Activated CD4-positive, alpha-beta T cell treated with anti-CD3 and anti-CD28 coated beads, Interleukin-2, amount 10 ng/mL, durations not matched to agents 7 days and 5 days (primary cell): ENCODE measurements at regions of chr14 and their contacts with region 1.

Region 1: GRCh38 chr14:49867831-49868723 is 15.5 kb upstream of the NEMF start:
- DNase-seq: peak; percentile 98
- H3K4me3 Mint-ChIP-seq: peak overlapping the region; percentile 88
- H3K27ac Mint-ChIP-seq: peak overlapping the region; percentile 95
- H3K4me1 Mint-ChIP-seq: peaks cover 19% of the 10 kb centered on the region
- H3K27me3 Mint-ChIP-seq: no peaks in the 10 kb centered on the region

Region 2: DNA sequence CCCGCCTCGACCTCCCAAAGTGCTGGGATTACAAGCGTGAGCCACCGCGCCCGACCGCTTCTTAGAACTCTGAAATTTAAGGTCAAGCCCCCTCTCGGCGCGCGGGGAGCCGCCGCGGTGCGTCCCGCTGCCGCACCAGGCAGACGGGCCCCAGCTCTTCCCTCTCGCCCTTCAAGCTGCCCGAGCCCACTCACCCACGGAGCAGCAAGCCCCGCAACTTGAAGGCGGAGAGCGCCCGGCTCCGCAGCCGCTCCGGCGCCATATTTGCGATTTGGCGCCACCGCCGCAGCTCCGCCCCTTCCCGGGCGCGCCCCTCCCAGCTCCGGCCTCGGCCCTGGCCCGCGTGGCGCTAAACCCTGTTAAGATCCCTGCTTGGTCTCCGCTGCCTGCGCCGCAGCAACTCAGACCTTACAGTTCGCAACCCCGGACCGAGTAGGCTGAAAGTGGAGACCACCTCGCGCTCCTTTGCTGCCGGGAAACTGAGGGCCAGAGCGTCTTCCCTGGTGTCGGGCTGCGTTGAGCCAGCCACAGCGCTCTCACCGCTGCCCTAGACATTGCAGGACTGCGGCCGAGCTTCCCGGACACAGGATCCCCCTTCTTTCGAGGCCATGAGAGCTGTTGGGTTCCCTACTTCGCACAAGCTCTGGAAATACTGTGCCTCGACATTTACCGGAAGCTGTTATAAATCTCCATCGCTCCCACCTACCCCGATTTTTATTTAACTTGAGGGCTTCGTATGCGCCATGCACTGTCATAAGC is 180.0 kb before region 1 on chr14 and contains the start of gene POLE2:
- CTCF ChIA-PET with region 1: no interaction called
- POLR2A ChIA-PET with region 1: no interaction called
- DNase-seq: peak; percentile 77
- H3K4me3 Mint-ChIP-seq: peak within 1 kb of the TSS; percentile 90
- H3K27ac Mint-ChIP-seq: peak within 1 kb of the TSS; percentile 94
- H3K4me1 Mint-ChIP-seq: peaks cover 55% of the 10 kb centered on the region
- H3K27me3 Mint-ChIP-seq: no peaks in the 10 kb centered on the region
- total RNA-seq, gene POLE2: 32.3 to 35.7 TPM

Region 3: GRCh38 chr14:49852301-49853157 is 15.5 kb before region 1 on chr14 and contains the start of gene NEMF:
- CTCF ChIA-PET with region 1: interaction called, 164 read pairs
- POLR2A ChIA-PET with region 1: interaction called, 15 read pairs
- DNase-seq: peak; percentile 90
- H3K4me3 Mint-ChIP-seq: peak within 1 kb of the TSS; percentile 92
- H3K27ac Mint-ChIP-seq: peak within 1 kb of the TSS; percentile 97
- H3K4me1 Mint-ChIP-seq: peaks cover 45% of the 10 kb centered on the region
- H3K27me3 Mint-ChIP-seq: no peaks in the 10 kb centered on the region
- total RNA-seq, gene NEMF: 76.7 to 89.1 TPM

Region 4: GRCh38 chr14:49879683-49880204 is 11.7 kb after region 1 on chr14:
- CTCF ChIA-PET with region 1: interaction called, 26 read pairs
- POLR2A ChIA-PET with region 1: interaction called, 11 read pairs
- DNase-seq: peak; percentile 63
- H3K4me3 Mint-ChIP-seq: no peak overlapping the region
- H3K27ac Mint-ChIP-seq: peak overlapping the region; percentile 71
- H3K4me1 Mint-ChIP-seq: peaks cover 30% of the 10 kb centered on the region
- H3K27me3 Mint-ChIP-seq: peaks cover 4% of the 10 kb centered on the region

Region 5: GRCh38 chr14:50109342-50109741 is 241.3 kb after region 1 on chr14:
- CTCF ChIA-PET with region 1: interaction called, 130 read pairs
- POLR2A ChIA-PET with region 1: no interaction called
- DNase-seq: no peak
- H3K4me3 Mint-ChIP-seq: no peak overlapping the region
- H3K27ac Mint-ChIP-seq: no peak overlapping the region
- H3K4me1 Mint-ChIP-seq: peaks cover 22% of the 10 kb centered on the region
- H3K27me3 Mint-ChIP-seq: no peaks in the 10 kb centered on the region

Region 6: GRCh38 chr14:50462111-50462510 is 594.0 kb after region 1 on chr14:
- CTCF ChIA-PET with region 1: no interaction called
- POLR2A ChIA-PET with region 1: no interaction called
- DNase-seq: no peak
- H3K4me3 Mint-ChIP-seq: no peak overlapping the region
- H3K27ac Mint-ChIP-seq: no peak overlapping the region
- H3K4me1 Mint-ChIP-seq: no peaks in the 10 kb centered on the region
- H3K27me3 Mint-ChIP-seq: no peaks in the 10 kb centered on the region